MCF 10A (cell line): ENCODE measurements at regions of chr2 and their contacts with region 1.

Region 1: GRCh38 chr2:196453613-196454047 is 185.9 kb upstream of the CCDC150 start:
- DNase-seq: peak; percentile 60
- H3K4me3 Mint-ChIP-seq: no peak overlapping the region
- H3K27ac Mint-ChIP-seq: no peak overlapping the region
- H3K4me1 Mint-ChIP-seq: no peaks in the 10 kb centered on the region
- H3K27me3 Mint-ChIP-seq: no peaks in the 10 kb centered on the region
- CTCF ChIP-seq: peak; percentile 78

Region 2: GRCh38 chr2:196076778-196077568 is 376.7 kb before region 1 on chr2:
- CTCF ChIA-PET with region 1: interaction called, 67 read pairs
- POLR2A ChIA-PET with region 1: interaction called, 3 read pairs
- intact Hi-C with region 1: loop called (anchors 1 kb)
- DNase-seq: no peak
- H3K4me3 Mint-ChIP-seq: no peak overlapping the region
- H3K27ac Mint-ChIP-seq: no peak overlapping the region
- H3K4me1 Mint-ChIP-seq: no peaks in the 10 kb centered on the region
- H3K27me3 Mint-ChIP-seq: no peaks in the 10 kb centered on the region
- CTCF ChIP-seq: no peak

Region 3: DNA sequence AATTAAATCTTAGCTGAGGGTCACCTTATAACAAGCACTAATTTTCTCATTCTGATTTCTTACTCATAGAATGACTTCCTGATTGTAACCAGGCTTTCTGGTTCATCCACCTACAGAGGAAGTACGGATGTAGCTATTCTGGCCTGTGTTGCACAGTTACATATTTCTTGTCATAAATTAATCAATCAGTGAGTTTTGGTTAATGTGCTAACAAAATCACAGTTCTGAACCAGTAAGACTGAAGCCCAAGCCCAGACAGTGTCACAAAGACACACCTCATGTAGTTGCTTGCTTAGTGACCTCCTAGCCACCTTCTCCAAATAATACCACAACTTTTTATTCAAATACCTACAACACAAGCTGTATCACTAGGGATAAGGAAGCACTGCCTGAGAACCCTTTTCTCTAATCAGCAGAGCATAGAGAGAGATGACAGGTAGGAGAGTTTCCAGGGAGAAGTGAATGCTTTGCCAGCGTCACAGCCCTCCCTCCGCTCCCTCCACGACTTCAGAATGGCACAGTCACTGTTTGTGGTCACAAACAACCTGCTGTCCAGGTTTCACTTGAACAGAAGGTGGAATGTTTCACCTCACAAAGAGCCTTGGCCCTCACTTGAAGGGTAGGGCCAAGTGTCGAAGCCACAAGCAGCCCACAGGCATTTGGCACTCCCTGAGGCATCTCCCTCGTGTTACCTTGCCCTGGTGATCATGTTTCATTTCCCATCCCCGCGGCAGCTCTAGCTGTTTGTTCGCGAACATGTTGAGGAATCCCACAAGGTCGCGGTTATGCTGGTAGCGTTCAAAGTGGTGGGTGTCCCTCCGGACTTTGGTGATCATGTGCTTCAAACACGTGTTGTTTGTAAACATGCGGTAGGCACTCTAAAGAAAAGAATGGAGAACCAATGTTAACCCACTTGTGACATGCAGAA is 161.5 kb before region 1 on chr2:
- CTCF ChIA-PET with region 1: interaction called, 14 read pairs
- POLR2A ChIA-PET with region 1: no interaction called
- intact Hi-C with region 1: no loop called
- DNase-seq: peak; percentile 87
- H3K4me3 Mint-ChIP-seq: peak overlapping the region; percentile 4
- H3K27ac Mint-ChIP-seq: peak overlapping the region; percentile 31
- H3K4me1 Mint-ChIP-seq: peaks cover 36% of the 10 kb centered on the region
- H3K27me3 Mint-ChIP-seq: no peaks in the 10 kb centered on the region
- CTCF ChIP-seq: no peak

Region 4: DNA sequence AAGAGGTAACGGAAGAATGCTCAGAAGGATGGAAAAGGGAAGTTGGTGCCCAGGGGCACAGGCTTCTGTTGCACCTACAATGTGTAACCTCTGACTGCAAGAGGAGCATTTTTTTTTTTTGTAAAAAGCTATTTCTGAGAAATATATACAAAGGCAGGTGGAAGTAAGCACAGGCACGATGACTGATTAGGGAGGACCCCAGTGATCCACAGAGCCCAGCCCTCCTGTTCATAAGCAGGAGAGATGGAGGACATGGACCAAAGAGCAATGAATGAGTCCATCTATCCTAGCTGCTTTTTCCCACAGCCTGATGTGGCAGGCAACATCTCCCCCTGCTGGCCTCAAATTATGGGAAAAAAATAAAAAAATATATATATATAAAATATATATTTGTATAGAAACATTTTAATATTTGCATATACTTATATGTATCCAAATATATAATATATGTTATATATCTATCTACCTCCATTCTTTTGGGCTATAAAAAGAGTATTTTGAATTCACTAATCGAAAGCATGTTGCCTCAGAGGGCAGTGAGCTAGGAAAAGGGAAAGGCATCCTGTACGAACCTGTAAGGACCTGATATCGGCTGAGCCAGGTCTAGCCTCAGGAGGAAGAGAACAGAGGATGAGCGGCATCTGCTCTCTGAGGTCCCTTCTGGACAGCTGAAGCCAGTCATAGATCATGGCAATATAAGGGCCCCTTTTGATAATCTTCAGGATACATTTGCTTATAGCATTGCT is 116.2 kb before region 1 on chr2:
- CTCF ChIA-PET with region 1: interaction called, 5 read pairs
- POLR2A ChIA-PET with region 1: no interaction called
- intact Hi-C with region 1: loop called (anchors 2 kb)
- DNase-seq: peak; percentile 49
- H3K4me3 Mint-ChIP-seq: no peak overlapping the region
- H3K27ac Mint-ChIP-seq: no peak overlapping the region
- H3K4me1 Mint-ChIP-seq: no peaks in the 10 kb centered on the region
- H3K27me3 Mint-ChIP-seq: no peaks in the 10 kb centered on the region
- CTCF ChIP-seq: peak; percentile 35

Region 5: GRCh38 chr2:196367633-196368032 is 86.0 kb before region 1 on chr2:
- CTCF ChIA-PET with region 1: no interaction called
- POLR2A ChIA-PET with region 1: no interaction called
- intact Hi-C with region 1: no loop called
- DNase-seq: no peak
- H3K4me3 Mint-ChIP-seq: no peak overlapping the region
- H3K27ac Mint-ChIP-seq: no peak overlapping the region
- H3K4me1 Mint-ChIP-seq: no peaks in the 10 kb centered on the region
- H3K27me3 Mint-ChIP-seq: no peaks in the 10 kb centered on the region
- CTCF ChIP-seq: no peak

Region 6: DNA sequence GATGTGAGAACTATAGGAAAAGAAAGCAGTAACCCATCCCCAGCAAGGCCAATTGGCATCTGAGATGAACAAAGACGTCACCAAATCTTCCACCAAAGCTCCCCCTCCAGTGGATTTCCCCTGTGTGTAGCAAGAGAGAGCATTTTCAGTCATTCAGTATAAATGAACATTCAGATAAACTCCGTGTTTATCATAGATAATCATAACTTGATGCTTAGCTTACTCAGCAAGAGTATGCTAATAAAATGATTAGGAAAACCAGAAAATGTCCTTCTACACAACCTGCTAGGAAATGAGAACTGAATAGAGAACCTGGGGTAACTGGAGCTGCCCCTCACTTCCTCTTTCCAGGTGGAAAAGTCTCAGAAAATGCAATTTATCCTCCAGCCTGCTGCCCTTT is 12.1 kb before region 1 on chr2:
- CTCF ChIA-PET with region 1: interaction called, 12 read pairs
- POLR2A ChIA-PET with region 1: no interaction called
- intact Hi-C with region 1: no loop called
- DNase-seq: no peak
- H3K4me3 Mint-ChIP-seq: no peak overlapping the region
- H3K27ac Mint-ChIP-seq: no peak overlapping the region
- H3K4me1 Mint-ChIP-seq: peaks cover 4% of the 10 kb centered on the region
- H3K27me3 Mint-ChIP-seq: no peaks in the 10 kb centered on the region
- CTCF ChIP-seq: no peak

Region 7: GRCh38 chr2:196473617-196474016 is 20.0 kb after region 1 on chr2:
- CTCF ChIA-PET with region 1: interaction called, 14 read pairs
- POLR2A ChIA-PET with region 1: no interaction called
- intact Hi-C with region 1: no loop called
- DNase-seq: no peak
- H3K4me3 Mint-ChIP-seq: no peak overlapping the region
- H3K27ac Mint-ChIP-seq: no peak overlapping the region
- H3K4me1 Mint-ChIP-seq: peaks cover 7% of the 10 kb centered on the region
- H3K27me3 Mint-ChIP-seq: no peaks in the 10 kb centered on the region
- CTCF ChIP-seq: no peak

Region 8: GRCh38 chr2:196598846-196599245 is 145.2 kb after region 1 on chr2:
- CTCF ChIA-PET with region 1: no interaction called
- POLR2A ChIA-PET with region 1: no interaction called
- intact Hi-C with region 1: no loop called
- DNase-seq: no peak
- H3K4me3 Mint-ChIP-seq: no peak overlapping the region
- H3K27ac Mint-ChIP-seq: no peak overlapping the region
- H3K4me1 Mint-ChIP-seq: peaks cover 9% of the 10 kb centered on the region
- H3K27me3 Mint-ChIP-seq: no peaks in the 10 kb centered on the region
- CTCF ChIP-seq: no peak